ENCODE measurements at regions of chr3 and their contacts with region 1.

Region 1: DNA sequence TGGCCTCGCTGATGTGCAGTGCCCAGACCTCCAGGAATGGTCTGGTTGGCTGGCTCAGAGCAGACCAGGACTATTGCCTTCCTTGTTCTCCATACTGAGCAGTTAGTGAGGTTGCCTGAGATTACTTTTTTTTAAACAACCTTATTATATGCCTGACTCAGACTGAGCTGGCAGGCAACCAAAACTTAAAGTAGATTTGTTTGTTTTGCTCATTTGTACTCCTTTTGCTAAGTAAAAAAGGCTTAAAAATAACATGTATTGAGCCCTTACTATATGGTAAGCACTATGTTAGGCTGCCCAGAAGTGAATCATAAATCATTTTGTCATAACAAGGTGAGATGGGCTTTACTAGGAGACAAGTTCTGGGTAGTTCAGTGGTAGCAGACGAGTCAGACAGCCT is 92.4 kb downstream of the GHSR start:
- DNase-seq: peak; percentile 93
- H3K4me3 ChIP-seq: no peak overlapping the region
- H3K27ac ChIP-seq: no peak overlapping the region
- H3K4me1 ChIP-seq: peaks cover 16% of the 10 kb centered on the region
- H3K27me3 ChIP-seq: no peaks in the 10 kb centered on the region
- CTCF ChIP-seq: no peak
- POLR2A ChIP-seq: no peak

Region 2: GRCh38 chr3:172181932-172182586 is 173.8 kb before region 1 on chr3:
- CTCF ChIA-PET with region 1: no interaction called
- POLR2A ChIA-PET with region 1: no interaction called
- dilution Hi-C with region 1: no loop called
- intact Hi-C with region 1: no loop called
- DNase-seq: peak; percentile 76
- H3K4me3 ChIP-seq: no peak overlapping the region
- H3K27ac ChIP-seq: peak overlapping the region; percentile 62
- H3K4me1 ChIP-seq: peaks cover 38% of the 10 kb centered on the region
- H3K27me3 ChIP-seq: no peaks in the 10 kb centered on the region
- CTCF ChIP-seq: no peak
- POLR2A ChIP-seq: no peak

Region 3: GRCh38 chr3:172323894-172324610 is 31.8 kb before region 1 on chr3:
- CTCF ChIA-PET with region 1: no interaction called
- POLR2A ChIA-PET with region 1: no interaction called
- dilution Hi-C with region 1: no loop called
- intact Hi-C with region 1: no loop called
- DNase-seq: no peak
- H3K4me3 ChIP-seq: no peak overlapping the region
- H3K27ac ChIP-seq: no peak overlapping the region
- H3K4me1 ChIP-seq: peaks cover 2% of the 10 kb centered on the region
- H3K27me3 ChIP-seq: no peaks in the 10 kb centered on the region
- CTCF ChIP-seq: no peak
- POLR2A ChIP-seq: no peak

Region 4: GRCh38 chr3:172341482-172342059 is 14.3 kb before region 1 on chr3:
- CTCF ChIA-PET with region 1: interaction called, 43 read pairs
- POLR2A ChIA-PET with region 1: no interaction called
- dilution Hi-C with region 1: no loop called
- intact Hi-C with region 1: no loop called
- DNase-seq: peak; percentile 63
- H3K4me3 ChIP-seq: no peak overlapping the region
- H3K27ac ChIP-seq: no peak overlapping the region
- H3K4me1 ChIP-seq: no peaks in the 10 kb centered on the region
- H3K27me3 ChIP-seq: no peaks in the 10 kb centered on the region
- CTCF ChIP-seq: peak; percentile 28 to 34
- POLR2A ChIP-seq: no peak

Measured in endothelial cell of umbilical vein (primary cell).